ENCODE measurements at regions of chr20 and their contacts with region 1.

Region 1: DNA sequence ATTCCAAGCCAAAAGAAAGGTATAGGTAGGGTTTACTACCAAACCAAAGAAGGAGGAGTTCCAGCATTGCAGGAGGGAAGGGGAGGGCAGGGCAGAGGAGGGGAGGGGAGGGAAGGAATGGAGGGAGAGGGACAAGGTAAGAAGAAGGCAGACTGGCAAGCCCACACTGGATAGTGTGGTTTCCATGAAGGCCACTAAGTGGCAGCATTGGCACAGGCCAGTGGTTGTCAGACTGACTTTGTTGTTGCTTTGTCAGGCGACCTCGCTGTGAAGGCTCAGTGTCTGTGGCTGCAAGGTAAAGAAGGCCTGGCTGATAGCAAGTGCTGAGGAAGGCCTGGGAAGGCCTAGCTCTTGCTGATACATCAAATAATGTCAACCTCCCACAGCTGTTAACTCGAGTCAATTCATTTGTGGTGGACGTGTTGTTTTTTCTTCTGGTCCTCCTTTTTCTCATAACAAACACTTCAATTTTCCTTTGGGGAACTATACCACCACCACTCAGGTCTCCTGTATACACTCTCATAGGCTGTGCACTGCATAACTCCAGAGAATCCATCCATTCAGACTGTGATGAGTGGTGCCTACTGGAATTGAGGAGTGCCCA is 7.7 kb upstream of the ZNF334 start:
- DNase-seq: peak; percentile 78
- ATAC-seq: peak; percentile 98
- H3K4me3 ChIP-seq: no peak overlapping the region
- H3K27ac ChIP-seq: no peak overlapping the region
- H3K4me1 ChIP-seq: no peaks in the 10 kb centered on the region
- H3K27me3 ChIP-seq: peaks cover 4% of the 10 kb centered on the region; the same call in 1 of the 2 replicates
- CTCF ChIP-seq: peak; percentile 83

Region 2: DNA sequence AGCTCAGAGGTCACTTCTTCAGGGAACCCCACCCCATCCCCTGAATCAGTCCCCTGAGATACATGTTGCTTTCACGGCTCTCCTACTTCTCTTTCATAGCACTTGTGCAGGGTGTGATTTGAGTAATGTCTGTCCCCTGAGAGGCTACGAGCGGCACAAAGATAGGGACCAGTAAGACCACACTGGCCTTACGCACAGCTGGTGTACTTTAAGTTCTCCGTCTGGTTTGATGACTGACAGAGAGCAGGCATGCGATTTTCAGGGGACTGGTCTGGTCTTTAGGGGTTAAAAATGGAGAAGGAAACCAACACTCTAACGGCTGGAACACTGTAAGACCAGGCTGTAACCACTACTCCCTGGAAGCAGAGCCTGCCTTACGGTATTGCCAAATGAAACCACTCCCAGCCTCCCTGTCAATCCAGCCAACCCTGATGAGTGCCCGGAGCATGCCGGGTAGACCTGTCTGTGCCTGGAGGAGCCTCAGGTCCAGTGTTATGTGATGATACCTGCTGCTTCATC is 161.8 kb before region 1 on chr20:
- CTCF ChIA-PET with region 1: no interaction called
- POLR2A ChIA-PET with region 1: no interaction called
- intact Hi-C with region 1: no loop called
- DNase-seq: no peak
- ATAC-seq: no peak
- H3K4me3 ChIP-seq: no peak overlapping the region
- H3K27ac ChIP-seq: no peak overlapping the region
- H3K4me1 ChIP-seq: peaks cover 10% of the 10 kb centered on the region
- H3K27me3 ChIP-seq: no peaks in the 10 kb centered on the region
- CTCF ChIP-seq: no peak

Region 3: DNA sequence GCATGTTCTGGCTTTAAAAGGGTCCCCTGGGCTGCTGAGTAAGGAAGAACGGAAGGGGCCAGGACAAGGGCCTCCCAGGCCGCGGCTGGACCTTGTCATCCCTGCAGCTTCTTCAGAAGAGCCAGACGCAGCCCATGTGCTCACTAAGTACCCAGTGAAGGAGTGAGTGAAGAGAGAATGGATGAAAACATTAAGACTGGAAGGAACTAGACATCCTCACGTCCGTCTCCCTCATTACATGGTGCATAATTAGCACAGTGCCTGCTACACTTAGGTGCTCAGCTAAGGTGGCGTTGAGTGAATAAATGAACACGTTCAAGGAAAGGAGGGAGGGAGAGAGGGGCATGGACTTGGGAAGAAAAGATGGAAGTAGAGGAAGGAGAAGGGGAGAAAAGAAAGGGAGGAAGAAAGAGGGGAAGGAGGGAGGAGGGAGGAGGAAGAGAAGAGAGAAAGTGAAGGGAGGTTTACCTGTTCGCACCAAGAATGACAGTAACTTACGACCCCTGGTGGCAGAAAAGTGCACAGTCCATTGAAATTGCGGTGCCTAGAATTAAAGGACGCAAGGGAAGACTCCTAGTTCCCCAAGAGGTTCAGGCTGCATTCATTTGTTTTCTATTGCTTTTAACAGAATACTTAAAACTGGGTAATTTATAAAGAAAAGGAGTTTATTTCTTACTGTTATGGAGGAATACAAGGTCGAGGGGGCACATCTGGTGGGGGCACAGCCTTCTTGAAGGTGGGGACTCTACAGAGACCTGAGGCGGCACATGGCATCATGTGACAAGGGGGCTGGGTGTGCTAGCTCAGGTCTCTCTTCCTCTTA is 160.2 kb after region 1 on chr20:
- CTCF ChIA-PET with region 1: no interaction called
- POLR2A ChIA-PET with region 1: no interaction called
- intact Hi-C with region 1: loop called (anchors 1 kb)
- DNase-seq: peak; percentile 87
- ATAC-seq: peak; percentile 69
- H3K4me3 ChIP-seq: no peak overlapping the region
- H3K27ac ChIP-seq: no peak overlapping the region
- H3K4me1 ChIP-seq: no peaks in the 10 kb centered on the region
- H3K27me3 ChIP-seq: no peaks in the 10 kb centered on the region
- CTCF ChIP-seq: peak; percentile 92

Region 4: DNA sequence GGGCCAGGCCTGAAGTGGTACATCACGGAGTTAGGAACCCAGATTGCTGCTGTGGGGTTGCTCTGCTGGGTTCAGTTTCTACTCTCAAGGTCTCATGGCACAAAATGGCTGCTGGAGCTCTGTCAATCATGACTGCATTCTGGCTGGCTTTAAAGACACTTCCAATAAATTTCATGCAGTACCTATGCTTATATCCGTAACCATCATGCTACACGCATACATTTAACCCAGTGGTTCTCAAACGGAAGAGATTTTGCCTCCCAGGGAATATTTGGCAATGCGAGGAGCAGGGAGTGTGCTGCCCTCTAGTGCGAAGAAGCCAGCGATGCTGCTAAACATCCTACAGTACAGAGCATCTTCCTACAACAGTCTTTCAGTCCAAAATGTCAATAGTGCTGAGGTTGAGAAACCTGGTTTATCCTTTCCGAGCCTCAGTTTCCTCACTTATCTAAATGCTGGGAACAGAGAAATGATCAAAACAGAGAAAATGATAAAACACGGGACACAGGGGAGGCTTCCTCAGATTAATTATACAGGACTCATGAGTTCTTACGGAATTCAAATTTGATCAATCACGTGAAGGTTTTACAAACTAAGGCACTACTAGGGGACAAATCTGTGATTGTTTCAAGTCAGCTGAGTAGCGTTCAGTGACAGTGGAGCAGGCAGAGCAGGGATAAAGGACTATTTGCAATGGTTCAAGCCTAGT is 178.7 kb after region 1 on chr20:
- CTCF ChIA-PET with region 1: no interaction called
- POLR2A ChIA-PET with region 1: no interaction called
- intact Hi-C with region 1: loop called (anchors 1 kb)
- DNase-seq: peak; percentile 72
- ATAC-seq: peak; percentile 84
- H3K4me3 ChIP-seq: no peak overlapping the region
- H3K27ac ChIP-seq: no peak overlapping the region
- H3K4me1 ChIP-seq: peaks cover 13% of the 10 kb centered on the region
- H3K27me3 ChIP-seq: no peaks in the 10 kb centered on the region
- CTCF ChIP-seq: peak; percentile 96

Region 5: GRCh38 chr20:47821481-47822439 is 1300.7 kb after region 1 on chr20:
- CTCF ChIA-PET with region 1: no interaction called
- POLR2A ChIA-PET with region 1: no interaction called
- intact Hi-C with region 1: no loop called
- DNase-seq: peak; percentile 96
- ATAC-seq: peak; percentile 71
- H3K4me3 ChIP-seq: no peak overlapping the region
- H3K27ac ChIP-seq: peak overlapping the region; percentile 78
- H3K4me1 ChIP-seq: peaks cover 37% of the 10 kb centered on the region
- H3K27me3 ChIP-seq: no peaks in the 10 kb centered on the region
- CTCF ChIP-seq: no peak